ACHN (cell line): ENCODE measurements at regions of chr10 and their contacts with region 1.

Region 1: DNA sequence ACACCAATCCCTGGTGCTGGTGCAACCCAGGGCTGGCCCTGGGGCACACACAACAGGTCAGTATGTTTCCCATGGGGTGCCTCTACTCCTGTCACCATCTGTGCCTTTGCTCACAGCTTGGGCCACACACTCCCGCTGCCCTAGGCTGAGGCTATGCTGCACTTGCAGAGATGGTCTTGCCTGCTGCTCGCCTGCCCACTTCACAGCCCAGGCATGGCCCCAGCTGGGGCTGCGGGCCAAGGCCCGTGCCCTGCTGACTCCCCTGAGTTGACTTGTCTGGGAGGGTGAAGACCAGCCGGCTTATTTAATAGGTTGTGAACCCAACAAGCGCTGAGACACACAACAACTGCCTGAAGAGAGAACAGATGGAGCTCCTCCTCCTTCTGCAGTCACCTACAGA is 184.1 kb downstream of the ZNF33B start:
- DNase-seq: no peak

Region 2: GRCh38 chr10:42574336-42574735 is 120.0 kb after region 1 on chr10:
- in situ Hi-C with region 1: no loop called
- DNase-seq: no peak

Region 3: DNA sequence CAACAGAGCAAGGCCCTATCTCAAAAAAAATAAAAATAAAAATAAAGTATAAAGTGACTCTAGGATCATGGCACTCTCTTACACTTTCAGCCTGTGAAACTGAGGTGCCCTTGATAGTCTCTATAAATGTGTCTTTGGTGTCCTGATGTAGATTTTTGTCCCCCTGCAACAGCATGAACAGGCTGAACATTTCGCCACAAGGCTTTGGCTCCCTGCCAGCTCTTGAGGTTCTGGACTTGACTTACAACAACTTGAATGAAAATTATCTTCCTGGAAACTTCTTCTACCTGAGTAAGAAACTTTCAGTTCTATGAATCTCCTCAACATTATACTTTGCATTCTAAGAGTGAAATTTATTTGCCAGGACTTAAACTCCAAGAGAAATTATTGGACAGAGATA is 280.2 kb after region 1 on chr10:
- in situ Hi-C with region 1: loop called (anchors 25 kb)
- DNase-seq: no peak